Lower leg skin (tissue), 4 donors: ENCODE measurements at regions of chr17 and their contacts with region 1.

Region 1: GRCh38 chr17:41737680-41738023 is 3.2 kb upstream of the HAP1 start:
- DNase-seq: no peak
- H3K4me3 ChIP-seq: no peak overlapping the region
- CTCF ChIP-seq: no peak
- POLR2A ChIP-seq: no peak

Region 2: GRCh38 chr17:41678411-41678906 is 59.2 kb before region 1 on chr17:
- intact Hi-C with region 1: no loop called
- DNase-seq: no peak
- H3K4me3 ChIP-seq: no peak overlapping the region
- CTCF ChIP-seq: no peak
- POLR2A ChIP-seq: no peak

Region 3: GRCh38 chr17:41801374-41802271 is 64.0 kb after region 1 on chr17:
- intact Hi-C with region 1: loop called (anchors 2 kb)
- DNase-seq: peak; percentile 83 to 98
- H3K4me3 ChIP-seq: no peak overlapping the region
- CTCF ChIP-seq: peak in 1 of 3 donors; percentile 89
- POLR2A ChIP-seq: no peak

Region 4: GRCh38 chr17:41930009-41930832 is 192.6 kb after region 1 on chr17 and contains the start of gene ODAD4:
- intact Hi-C with region 1: no loop called
- DNase-seq: peak; percentile 94 to 99
- H3K4me3 ChIP-seq: peak within 1 kb of the TSS; percentile 7
- CTCF ChIP-seq: peak in 1 of 3 donors; percentile 89
- POLR2A ChIP-seq: peak in 1 of 2 donors; percentile 25
- total RNA-seq, gene ODAD4: 0.13 to 0.42 (median 0.20) TPM in 3 of 4 donors, not detected in the other

Region 5: DNA sequence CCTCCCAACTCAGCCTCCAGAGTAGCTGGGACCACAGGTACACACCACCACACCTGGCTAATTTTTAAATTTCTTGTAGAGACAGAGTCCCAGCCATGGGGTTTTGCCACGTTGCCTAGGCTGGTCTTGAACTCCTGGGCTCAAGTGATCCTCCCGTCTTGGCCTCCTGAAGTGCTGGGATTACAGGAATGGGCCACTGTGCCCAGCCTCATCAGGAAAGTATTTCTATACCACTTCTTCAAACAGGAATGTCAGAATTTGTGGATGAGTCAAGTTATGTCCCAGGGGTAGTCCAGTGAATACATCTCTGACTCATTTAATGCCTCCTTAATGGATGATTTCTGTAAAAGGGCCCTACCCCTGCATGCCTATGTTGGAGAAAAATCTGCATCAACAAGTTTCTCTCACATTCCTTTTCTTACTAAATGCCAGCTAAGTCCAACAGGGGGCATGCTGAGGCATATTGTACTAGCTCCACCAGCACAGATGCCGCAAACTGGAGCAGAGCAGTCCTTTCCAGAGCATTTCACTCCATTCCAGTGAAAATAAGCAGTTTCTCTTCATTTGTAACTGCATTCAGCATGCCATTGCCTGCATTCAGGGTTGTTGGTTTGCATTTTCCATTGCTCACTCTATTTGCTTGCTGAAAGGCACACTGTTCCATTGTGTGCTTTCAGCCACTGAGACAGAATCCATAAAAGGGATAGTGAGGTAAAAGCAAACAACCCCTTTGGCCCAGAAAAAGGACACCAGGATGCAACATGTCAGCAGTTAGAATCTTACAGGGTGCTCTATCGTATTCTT is 690.7 kb after region 1 on chr17:
- intact Hi-C with region 1: no loop called
- DNase-seq: peak in 1 of 2 donors; percentile 73
- H3K4me3 ChIP-seq: no peak overlapping the region
- CTCF ChIP-seq: peak in 1 of 3 donors; percentile 83
- POLR2A ChIP-seq: no peak